Posterior vena cava (tissue), 2 donors: ENCODE measurements at regions of chr4 and their contacts with region 1.

Region 1: GRCh38 chr4:24794916-24795665 is at the start of gene SOD3:
- DNase-seq: peak; percentile 94
- total RNA-seq, gene SOD3: 289 to 415 TPM

Region 2: GRCh38 chr4:24584175-24584850 is 210.8 kb before region 1 on chr4 and contains the start of gene DHX15:
- intact Hi-C with region 1: loop called in 1 of 2 experiments (anchors 10 kb)
- DNase-seq: peak; percentile 99
- total RNA-seq, gene DHX15: 81.7 to 99.2 TPM

Region 3: DNA sequence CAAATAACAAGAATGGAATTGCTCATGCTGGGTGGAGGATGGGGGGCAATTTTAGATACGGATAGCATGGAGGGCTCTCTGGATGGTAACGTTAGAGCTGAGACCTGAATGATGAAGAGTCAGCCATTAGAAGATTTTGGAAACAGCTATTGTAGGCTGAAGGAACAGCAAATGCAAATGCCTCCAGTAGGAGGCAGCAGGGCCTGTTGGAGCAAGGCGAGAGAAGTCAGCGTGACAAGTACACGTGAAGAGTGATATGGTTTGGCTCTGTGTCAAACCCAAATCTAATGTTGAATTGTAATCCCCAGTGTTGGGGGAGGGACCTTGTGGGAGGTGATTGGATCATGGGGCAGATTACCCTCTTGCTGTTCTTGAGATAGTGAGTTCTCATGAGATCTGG is 59.0 kb before region 1 on chr4:
- intact Hi-C with region 1: loop called in 1 of 2 experiments (anchors 5 kb)
- DNase-seq: no peak

Region 4: GRCh38 chr4:24849756-24850155 is 54.7 kb after region 1 on chr4:
- intact Hi-C with region 1: loop called in 1 of 2 experiments (anchors 5 kb)
- DNase-seq: no peak